Common myeloid progenitor, CD34-positive (primary cell): ENCODE measurements at regions of chr9 and their contacts with region 1.

Region 1: GRCh38 chr9:71683598-71684235 is 84.6 kb downstream of the CEMIP2 start:
- DNase-seq: peak; percentile 78 to 89 (median 86)
- H3K4me3 ChIP-seq: peak overlapping the region in 1 of 7 experiments; percentile 3
- H3K27ac ChIP-seq: no peak overlapping the region
- H3K4me1 ChIP-seq: peaks cover 19 to 62% (median 40%) of the 10 kb centered on the region in 4 experiments
- H3K27me3 ChIP-seq: no peaks in the 10 kb centered on the region

Region 2: GRCh38 chr9:71647094-71647591 is 36.6 kb before region 1 on chr9:
- CTCF ChIA-PET with region 1: interaction called, 16 read pairs
- POLR2A ChIA-PET with region 1: interaction called, 3 read pairs
- DNase-seq: peak; percentile 83 to 85 (median 84)
- H3K4me3 ChIP-seq: peak overlapping the region in 4 of 7 experiments; percentile 12 to 50 (median 33)
- H3K27ac ChIP-seq: no peak overlapping the region
- H3K4me1 ChIP-seq: peaks cover 11 to 51% (median 40%) of the 10 kb centered on the region in 4 experiments
- H3K27me3 ChIP-seq: no peaks in the 10 kb centered on the region

Region 3: GRCh38 chr9:71709384-71709783 is 25.7 kb after region 1 on chr9:
- CTCF ChIA-PET with region 1: interaction called, 26 read pairs
- POLR2A ChIA-PET with region 1: no interaction called
- DNase-seq: no peak
- H3K4me3 ChIP-seq: no peak overlapping the region
- H3K27ac ChIP-seq: no peak overlapping the region
- H3K4me1 ChIP-seq: no peaks in the 10 kb centered on the region
- H3K27me3 ChIP-seq: no peaks in the 10 kb centered on the region